Heart right ventricle (tissue), 16 donors: ENCODE measurements at regions of chr6 and their contacts with region 1.

Region 1: DNA sequence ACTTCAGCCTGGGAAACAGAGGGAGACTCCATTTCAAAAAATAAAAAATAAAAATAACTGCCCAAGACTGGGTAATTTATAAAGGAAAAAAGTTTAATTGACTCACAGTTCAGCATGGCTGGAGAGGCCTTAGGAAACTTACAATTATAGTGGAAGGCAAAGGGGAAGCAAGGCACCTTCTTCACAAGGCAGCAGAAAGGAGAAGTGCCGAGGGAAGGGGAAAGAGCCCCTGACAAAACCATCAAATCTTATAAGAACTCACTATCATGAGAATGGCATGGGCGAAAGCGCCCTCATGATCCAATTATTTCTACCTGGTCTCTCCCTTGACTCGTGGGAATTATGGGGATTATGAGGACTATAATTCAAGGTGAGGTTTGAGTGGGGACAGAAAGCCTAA is 95.5 kb upstream of the LGSN start:
- DNase-seq: no peak
- ATAC-seq: no peak
- H3K4me3 ChIP-seq: no peak overlapping the region
- H3K27ac ChIP-seq: no peak overlapping the region
- H3K4me1 ChIP-seq: no peaks in the 10 kb centered on the region
- H3K27me3 ChIP-seq: no peaks in the 10 kb centered on the region
- CTCF ChIP-seq: no peak

Region 2: GRCh38 chr6:62903263-62903662 is 512.0 kb before region 1 on chr6:
- intact Hi-C with region 1: no loop called
- DNase-seq: no peak
- ATAC-seq: no peak
- H3K4me3 ChIP-seq: no peak overlapping the region
- H3K27ac ChIP-seq: no peak overlapping the region
- H3K4me1 ChIP-seq: no peaks in the 10 kb centered on the region
- H3K27me3 ChIP-seq: no peaks in the 10 kb centered on the region
- CTCF ChIP-seq: no peak

Region 3: GRCh38 chr6:63371104-63371715 is 44.1 kb before region 1 on chr6:
- intact Hi-C with region 1: loop called in 1 of 10 experiments (anchors 2 kb)
- DNase-seq: no peak
- ATAC-seq: no peak
- H3K4me3 ChIP-seq: no peak overlapping the region
- H3K27ac ChIP-seq: no peak overlapping the region
- H3K4me1 ChIP-seq: peaks cover 0 to 5% (median 0%) of the 10 kb centered on the region in 9 donors
- H3K27me3 ChIP-seq: peaks cover 0 to 3% (median 0%) of the 10 kb centered on the region in 7 donors
- CTCF ChIP-seq: no peak

Region 4: GRCh38 chr6:63609231-63609630 is 193.9 kb after region 1 on chr6:
- intact Hi-C with region 1: no loop called
- DNase-seq: no peak
- ATAC-seq: no peak
- H3K4me3 ChIP-seq: no peak overlapping the region
- H3K27ac ChIP-seq: no peak overlapping the region
- H3K4me1 ChIP-seq: no peaks in the 10 kb centered on the region
- H3K27me3 ChIP-seq: no peaks in the 10 kb centered on the region
- CTCF ChIP-seq: no peak